Activated CD4-positive, alpha-beta memory T cell treated with anti-CD3 and anti-CD28 coated beads for 36 hours (primary cell): ENCODE measurements at regions of chr21 and their contacts with region 1.

Region 1: GRCh38 chr21:31731802-31732596 is at the start of gene SCAF4:
- DNase-seq: peak; percentile 90
- H3K4me3 Mint-ChIP-seq: peak within 1 kb of the TSS; percentile 86
- H3K27ac Mint-ChIP-seq: peak within 1 kb of the TSS; percentile 76
- H3K4me1 Mint-ChIP-seq: peaks cover 6% of the 10 kb centered on the region
- H3K27me3 Mint-ChIP-seq: no peaks in the 10 kb centered on the region
- total RNA-seq, gene SCAF4: 38.0 to 39.4 TPM

Region 2: GRCh38 chr21:31132574-31133242 is 599.3 kb before region 1 on chr21:
- CTCF ChIA-PET with region 1: no interaction called
- POLR2A ChIA-PET with region 1: no interaction called
- intact Hi-C with region 1: loop called (anchors 1 kb)
- DNase-seq: peak; percentile 82
- H3K4me3 Mint-ChIP-seq: peak overlapping the region; percentile 64
- H3K27ac Mint-ChIP-seq: peak overlapping the region; percentile 95
- H3K4me1 Mint-ChIP-seq: peaks cover 65% of the 10 kb centered on the region
- H3K27me3 Mint-ChIP-seq: no peaks in the 10 kb centered on the region

Region 3: GRCh38 chr21:31498981-31499380 is 233.0 kb before region 1 on chr21:
- CTCF ChIA-PET with region 1: no interaction called
- POLR2A ChIA-PET with region 1: no interaction called
- intact Hi-C with region 1: no loop called
- DNase-seq: no peak
- H3K4me3 Mint-ChIP-seq: no peak overlapping the region
- H3K27ac Mint-ChIP-seq: no peak overlapping the region
- H3K4me1 Mint-ChIP-seq: no peaks in the 10 kb centered on the region
- H3K27me3 Mint-ChIP-seq: no peaks in the 10 kb centered on the region

Region 4: DNA sequence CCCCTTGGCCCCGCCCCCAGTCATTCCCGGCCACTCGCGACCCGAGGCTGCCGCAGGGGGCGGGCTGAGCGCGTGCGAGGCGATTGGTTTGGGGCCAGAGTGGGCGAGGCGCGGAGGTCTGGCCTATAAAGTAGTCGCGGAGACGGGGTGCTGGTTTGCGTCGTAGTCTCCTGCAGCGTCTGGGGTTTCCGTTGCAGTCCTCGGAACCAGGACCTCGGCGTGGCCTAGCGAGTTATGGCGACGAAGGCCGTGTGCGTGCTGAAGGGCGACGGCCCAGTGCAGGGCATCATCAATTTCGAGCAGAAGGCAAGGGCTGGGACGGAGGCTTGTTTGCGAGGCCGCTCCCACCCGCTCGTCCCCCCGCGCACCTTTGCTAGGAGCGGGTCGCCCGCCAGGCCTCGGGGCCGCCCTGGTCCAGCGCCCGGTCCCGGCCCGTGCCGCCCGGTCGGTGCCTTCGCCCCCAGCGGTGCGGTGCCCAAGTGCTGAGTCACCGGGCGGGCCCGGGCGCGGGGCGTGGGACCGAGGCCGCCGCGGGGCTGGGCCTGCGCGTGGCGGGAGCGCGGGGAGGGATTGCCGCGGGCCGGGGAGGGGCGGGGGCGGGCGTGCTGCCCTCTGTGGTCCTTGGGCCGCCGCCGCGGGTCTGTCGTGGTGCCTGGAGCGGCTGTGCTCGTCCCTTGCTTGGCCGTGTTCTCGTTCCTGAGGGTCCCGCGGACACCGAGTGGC is 72.3 kb before region 1 on chr21 and contains the start of gene SOD1:
- CTCF ChIA-PET with region 1: no interaction called
- POLR2A ChIA-PET with region 1: no interaction called
- intact Hi-C with region 1: loop called (anchors 1 kb)
- DNase-seq: peak; percentile 96
- H3K4me3 Mint-ChIP-seq: peak within 1 kb of the TSS; percentile 98
- H3K27ac Mint-ChIP-seq: peak within 1 kb of the TSS; percentile 99
- H3K4me1 Mint-ChIP-seq: peaks cover 65% of the 10 kb centered on the region
- H3K27me3 Mint-ChIP-seq: no peaks in the 10 kb centered on the region
- total RNA-seq, gene SOD1: 280 to 286 TPM

Region 5: DNA sequence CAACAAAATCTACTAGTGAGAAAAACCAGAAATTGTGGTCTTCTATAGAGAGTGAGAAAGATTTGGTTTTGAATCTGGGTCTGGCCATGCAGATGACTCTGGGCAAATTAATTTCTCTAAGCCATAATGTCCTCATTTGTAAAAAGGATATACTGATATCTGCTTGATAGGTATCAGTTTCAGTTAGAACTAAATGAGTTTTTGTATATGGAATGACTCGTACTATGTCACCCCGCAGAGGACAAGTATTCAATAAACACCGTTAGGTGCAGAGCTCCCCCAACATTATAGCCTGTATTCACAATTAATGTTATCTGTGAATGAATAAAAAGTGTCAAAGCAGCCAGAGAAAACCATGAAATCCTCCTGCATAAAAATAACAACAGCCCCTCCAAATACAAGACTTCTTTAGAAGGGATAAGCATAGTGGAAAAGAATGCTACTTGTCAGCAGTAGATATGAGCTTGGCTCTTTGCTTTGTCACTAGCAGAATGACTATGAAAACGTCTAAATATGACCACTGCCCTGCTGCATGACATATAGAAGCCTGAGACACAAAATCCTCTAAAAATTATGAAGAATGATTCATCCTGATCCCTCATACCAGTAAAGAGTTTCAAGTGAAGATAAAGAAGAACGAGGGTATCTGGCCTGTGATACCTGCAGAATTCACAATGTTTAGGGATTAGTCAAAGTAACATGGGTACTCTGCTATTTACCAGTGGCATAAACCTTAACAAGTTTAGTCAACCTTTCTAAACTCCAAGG is 17.8 kb before region 1 on chr21:
- CTCF ChIA-PET with region 1: no interaction called
- POLR2A ChIA-PET with region 1: no interaction called
- intact Hi-C with region 1: loop called (anchors 1 kb)
- DNase-seq: no peak
- H3K4me3 Mint-ChIP-seq: no peak overlapping the region
- H3K27ac Mint-ChIP-seq: peak overlapping the region; percentile 71
- H3K4me1 Mint-ChIP-seq: peaks cover 84% of the 10 kb centered on the region
- H3K27me3 Mint-ChIP-seq: no peaks in the 10 kb centered on the region

Region 6: GRCh38 chr21:32392880-32393676 is 661.1 kb after region 1 on chr21 and contains the start of gene URB1:
- CTCF ChIA-PET with region 1: no interaction called
- POLR2A ChIA-PET with region 1: no interaction called
- intact Hi-C with region 1: loop called (anchors 2 kb)
- DNase-seq: peak; percentile 96
- H3K4me3 Mint-ChIP-seq: peak within 1 kb of the TSS; percentile 80
- H3K27ac Mint-ChIP-seq: peak within 1 kb of the TSS; percentile 51
- H3K4me1 Mint-ChIP-seq: peaks cover 43% of the 10 kb centered on the region
- H3K27me3 Mint-ChIP-seq: peaks cover 2% of the 10 kb centered on the region
- total RNA-seq, gene URB1: 21.5 to 23.4 TPM